GM10248 (cell line): ENCODE measurements at regions of chr9 and their contacts with region 1.

Region 1: DNA sequence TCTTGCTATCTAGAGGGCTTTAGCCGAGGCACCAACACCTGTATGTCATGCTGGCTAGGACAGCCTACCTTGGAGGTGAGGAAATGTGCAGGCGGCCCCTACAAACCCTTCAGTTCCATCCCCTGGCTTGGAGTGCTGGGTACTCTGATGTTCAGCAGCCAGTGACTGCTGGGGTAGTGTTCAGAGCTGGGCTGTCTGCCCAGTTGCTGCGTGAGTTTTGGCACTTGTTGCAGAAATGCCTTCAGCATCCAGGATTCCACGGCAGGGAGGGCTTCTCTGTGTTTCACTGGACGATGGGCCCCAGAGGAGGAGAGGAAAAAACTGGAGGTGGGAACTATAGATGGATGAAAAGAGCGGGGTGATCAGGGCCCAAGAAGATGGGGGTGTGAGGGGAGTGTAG is 10.4 kb downstream of the SWI5 start:
- DNase-seq: no peak
- CTCF ChIP-seq: no peak

Region 2: DNA sequence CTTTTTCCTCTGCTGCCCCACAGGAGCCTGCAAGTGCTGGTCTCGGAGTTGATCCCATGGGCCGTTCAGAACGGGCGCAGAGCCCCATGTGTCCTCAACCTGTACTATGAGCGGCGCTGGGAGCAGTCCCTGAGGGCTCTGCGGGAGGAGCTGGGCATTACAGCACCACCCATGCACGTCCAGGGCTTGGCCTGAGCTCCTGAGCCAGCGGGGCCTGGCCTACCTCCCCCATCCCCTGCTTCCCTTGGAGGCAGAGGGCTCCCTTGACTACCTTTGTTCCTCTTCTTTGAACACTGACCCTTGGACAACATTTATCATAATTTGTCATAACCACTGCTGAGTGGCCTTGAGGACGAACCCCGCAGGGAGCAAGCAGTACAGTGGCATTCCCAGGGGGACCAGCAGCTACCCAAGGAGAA is 47.0 kb after region 1 on chr9:
- CTCF ChIA-PET with region 1: no interaction called
- POLR2A ChIA-PET with region 1: interaction called, 11 read pairs
- DNase-seq: no peak
- CTCF ChIP-seq: no peak